ENCODE measurements at regions of chr2 and their contacts with region 1.

Region 1: DNA sequence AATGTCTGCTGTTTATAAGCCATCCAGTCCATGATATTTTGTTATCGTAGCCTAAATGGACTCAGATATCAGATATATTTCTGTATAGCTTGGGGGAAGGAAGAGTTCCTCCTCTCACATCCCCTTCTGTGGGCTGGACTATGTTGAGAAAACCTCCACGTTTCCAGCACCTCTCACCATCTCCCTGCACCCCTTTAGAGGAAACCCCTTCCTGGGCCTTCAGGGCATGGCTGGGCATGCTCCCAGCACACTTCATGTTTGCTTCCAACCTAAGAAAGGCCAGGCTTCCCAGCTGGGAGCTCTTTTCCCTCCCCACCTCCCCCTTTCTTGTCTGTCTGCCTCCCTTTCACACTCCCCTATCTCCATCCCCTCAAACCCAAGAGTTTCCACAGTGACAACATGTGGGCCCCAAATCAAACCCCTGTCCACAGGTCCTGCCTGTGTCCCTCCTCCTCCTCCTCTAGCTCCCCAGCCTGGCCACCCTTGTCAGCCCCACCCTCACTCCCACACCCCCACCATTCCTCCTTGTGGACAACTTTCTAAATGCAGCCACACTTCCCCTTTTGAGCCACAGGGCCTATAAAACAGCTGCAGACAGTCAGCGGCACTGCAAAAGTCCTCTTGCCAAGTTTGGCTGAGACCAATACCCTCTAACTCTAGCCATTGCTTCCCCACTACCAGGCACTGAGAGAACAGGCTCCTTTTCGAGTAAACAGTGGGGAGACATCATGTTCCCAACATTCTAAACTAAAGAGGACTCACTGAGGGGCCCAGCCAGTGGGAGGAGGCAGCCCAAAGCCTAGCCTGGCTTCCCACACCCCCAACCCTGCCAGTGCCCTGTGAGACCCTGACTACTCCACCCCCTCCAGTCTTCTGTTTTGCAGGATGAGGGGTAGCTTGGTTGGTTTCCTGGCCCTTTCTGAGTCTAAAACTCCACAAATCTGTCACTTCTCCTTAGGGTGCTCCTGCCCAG is 120.5 kb downstream of the ZFP36L2 start:
- DNase-seq: peak; percentile 44
- H3K4me3 ChIP-seq: no peak overlapping the region
- H3K27ac ChIP-seq: peak overlapping the region; percentile 39
- H3K4me1 ChIP-seq: peaks cover 52% of the 10 kb centered on the region
- H3K27me3 ChIP-seq: no peaks in the 10 kb centered on the region
- CTCF ChIP-seq: peak; percentile 46 to 47

Region 2: GRCh38 chr2:42835577-42836371 is 270.1 kb before region 1 on chr2:
- CTCF ChIA-PET with region 1: no interaction called
- dilution Hi-C with region 1: loop called (anchors 10 kb)
- in situ Hi-C with region 1: no loop called
- intact Hi-C with region 1: no loop called
- DNase-seq: peak; percentile 97
- H3K4me3 ChIP-seq: no peak overlapping the region
- H3K27ac ChIP-seq: peak overlapping the region; percentile 26
- H3K4me1 ChIP-seq: peaks cover 11% of the 10 kb centered on the region
- H3K27me3 ChIP-seq: no peaks in the 10 kb centered on the region
- CTCF ChIP-seq: no peak

Region 3: GRCh38 chr2:42928692-42929545 is 177.0 kb before region 1 on chr2:
- CTCF ChIA-PET with region 1: no interaction called
- dilution Hi-C with region 1: loop called (anchors 5 kb)
- in situ Hi-C with region 1: no loop called
- intact Hi-C with region 1: no loop called
- DNase-seq: no peak
- H3K4me3 ChIP-seq: no peak overlapping the region
- H3K27ac ChIP-seq: no peak overlapping the region
- H3K4me1 ChIP-seq: peaks cover 37% of the 10 kb centered on the region
- H3K27me3 ChIP-seq: no peaks in the 10 kb centered on the region
- CTCF ChIP-seq: peak in 1 of 2 donors; percentile 47

Region 4: GRCh38 chr2:43059183-43059897 is 46.5 kb before region 1 on chr2:
- CTCF ChIA-PET with region 1: no interaction called
- dilution Hi-C with region 1: loop called (anchors 5 kb)
- in situ Hi-C with region 1: no loop called
- intact Hi-C with region 1: no loop called
- DNase-seq: peak; percentile 80
- H3K4me3 ChIP-seq: no peak overlapping the region
- H3K27ac ChIP-seq: no peak overlapping the region
- H3K4me1 ChIP-seq: peaks cover 11% of the 10 kb centered on the region
- H3K27me3 ChIP-seq: no peaks in the 10 kb centered on the region
- CTCF ChIP-seq: no peak

Region 5: GRCh38 chr2:43075054-43075593 is 30.7 kb before region 1 on chr2:
- CTCF ChIA-PET with region 1: no interaction called
- dilution Hi-C with region 1: no loop called
- in situ Hi-C with region 1: no loop called
- intact Hi-C with region 1: loop called (anchors 2 kb)
- DNase-seq: peak; percentile 96
- H3K4me3 ChIP-seq: no peak overlapping the region
- H3K27ac ChIP-seq: peak overlapping the region; percentile 90
- H3K4me1 ChIP-seq: peaks cover 34% of the 10 kb centered on the region
- H3K27me3 ChIP-seq: no peaks in the 10 kb centered on the region
- CTCF ChIP-seq: peak in 1 of 2 donors; percentile 25

Region 6: GRCh38 chr2:43142921-43143438 is 37.1 kb after region 1 on chr2:
- CTCF ChIA-PET with region 1: no interaction called
- dilution Hi-C with region 1: no loop called
- in situ Hi-C with region 1: no loop called
- intact Hi-C with region 1: no loop called
- DNase-seq: no peak
- H3K4me3 ChIP-seq: no peak overlapping the region
- H3K27ac ChIP-seq: no peak overlapping the region
- H3K4me1 ChIP-seq: no peaks in the 10 kb centered on the region
- H3K27me3 ChIP-seq: no peaks in the 10 kb centered on the region
- CTCF ChIP-seq: peak in 1 of 2 donors; percentile 20

Region 7: GRCh38 chr2:43158259-43158880 is 52.5 kb after region 1 on chr2:
- CTCF ChIA-PET with region 1: no interaction called
- dilution Hi-C with region 1: no loop called
- in situ Hi-C with region 1: no loop called
- intact Hi-C with region 1: loop called (anchors 5 kb)
- DNase-seq: peak; percentile 94
- H3K4me3 ChIP-seq: no peak overlapping the region
- H3K27ac ChIP-seq: peak overlapping the region; percentile 93
- H3K4me1 ChIP-seq: peaks cover 52% of the 10 kb centered on the region
- H3K27me3 ChIP-seq: no peaks in the 10 kb centered on the region
- CTCF ChIP-seq: no peak

Region 8: GRCh38 chr2:43169987-43170386 is 64.1 kb after region 1 on chr2:
- CTCF ChIA-PET with region 1: no interaction called
- dilution Hi-C with region 1: loop called (anchors 5 kb)
- in situ Hi-C with region 1: no loop called
- intact Hi-C with region 1: no loop called
- DNase-seq: no peak
- H3K4me3 ChIP-seq: no peak overlapping the region
- H3K27ac ChIP-seq: no peak overlapping the region
- H3K4me1 ChIP-seq: peaks cover 20% of the 10 kb centered on the region
- H3K27me3 ChIP-seq: no peaks in the 10 kb centered on the region
- CTCF ChIP-seq: peak; percentile 56 to 70